Prostate gland (tissue), 2 donors: ENCODE measurements at regions of chr1 and their contacts with region 1.

Region 1: GRCh38 chr1:3423245-3423829 is 31.1 kb upstream of the ARHGEF16 start:
- DNase-seq: no peak
- H3K4me3 ChIP-seq: no peak overlapping the region
- H3K27ac ChIP-seq: no peak overlapping the region
- H3K4me1 ChIP-seq: no peaks in the 10 kb centered on the region
- H3K27me3 ChIP-seq: no peaks in the 10 kb centered on the region
- CTCF ChIP-seq: no peak
- POLR2A ChIP-seq: no peak

Region 2: GRCh38 chr1:2821966-2822620 is 601.2 kb before region 1 on chr1:
- intact Hi-C with region 1: loop called (anchors 2 kb)
- DNase-seq: peak; percentile 14
- H3K4me3 ChIP-seq: no peak overlapping the region
- H3K27ac ChIP-seq: no peak overlapping the region
- H3K4me1 ChIP-seq: no peaks in the 10 kb centered on the region
- H3K27me3 ChIP-seq: no peaks in the 10 kb centered on the region
- CTCF ChIP-seq: peak; percentile 23 to 79 (median 64)
- POLR2A ChIP-seq: no peak

Region 3: DNA sequence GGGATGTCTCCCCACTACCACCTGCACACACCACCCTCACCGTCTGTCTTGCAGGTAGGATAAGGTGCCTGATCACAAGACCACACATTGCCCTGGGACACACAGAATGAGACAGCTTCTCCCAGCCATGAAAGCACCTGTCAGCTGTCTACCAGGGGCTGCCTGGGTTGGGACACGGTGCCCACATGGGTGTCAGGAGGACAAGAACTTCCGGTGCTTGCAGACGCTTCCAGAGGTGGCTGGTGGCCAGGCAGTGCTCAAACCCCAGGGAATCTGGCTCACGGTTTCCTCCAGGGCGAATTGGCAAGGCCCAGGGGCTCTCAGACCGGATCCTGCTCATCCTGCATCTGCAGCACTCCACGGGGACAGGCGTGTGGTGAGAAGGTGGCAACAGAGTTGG is 151.5 kb before region 1 on chr1:
- intact Hi-C with region 1: no loop called
- DNase-seq: no peak
- H3K4me3 ChIP-seq: no peak overlapping the region
- H3K27ac ChIP-seq: no peak overlapping the region
- H3K4me1 ChIP-seq: no peaks in the 10 kb centered on the region
- H3K27me3 ChIP-seq: peaks cover 4% of the 10 kb centered on the region
- CTCF ChIP-seq: no peak
- POLR2A ChIP-seq: no peak

Region 4: DNA sequence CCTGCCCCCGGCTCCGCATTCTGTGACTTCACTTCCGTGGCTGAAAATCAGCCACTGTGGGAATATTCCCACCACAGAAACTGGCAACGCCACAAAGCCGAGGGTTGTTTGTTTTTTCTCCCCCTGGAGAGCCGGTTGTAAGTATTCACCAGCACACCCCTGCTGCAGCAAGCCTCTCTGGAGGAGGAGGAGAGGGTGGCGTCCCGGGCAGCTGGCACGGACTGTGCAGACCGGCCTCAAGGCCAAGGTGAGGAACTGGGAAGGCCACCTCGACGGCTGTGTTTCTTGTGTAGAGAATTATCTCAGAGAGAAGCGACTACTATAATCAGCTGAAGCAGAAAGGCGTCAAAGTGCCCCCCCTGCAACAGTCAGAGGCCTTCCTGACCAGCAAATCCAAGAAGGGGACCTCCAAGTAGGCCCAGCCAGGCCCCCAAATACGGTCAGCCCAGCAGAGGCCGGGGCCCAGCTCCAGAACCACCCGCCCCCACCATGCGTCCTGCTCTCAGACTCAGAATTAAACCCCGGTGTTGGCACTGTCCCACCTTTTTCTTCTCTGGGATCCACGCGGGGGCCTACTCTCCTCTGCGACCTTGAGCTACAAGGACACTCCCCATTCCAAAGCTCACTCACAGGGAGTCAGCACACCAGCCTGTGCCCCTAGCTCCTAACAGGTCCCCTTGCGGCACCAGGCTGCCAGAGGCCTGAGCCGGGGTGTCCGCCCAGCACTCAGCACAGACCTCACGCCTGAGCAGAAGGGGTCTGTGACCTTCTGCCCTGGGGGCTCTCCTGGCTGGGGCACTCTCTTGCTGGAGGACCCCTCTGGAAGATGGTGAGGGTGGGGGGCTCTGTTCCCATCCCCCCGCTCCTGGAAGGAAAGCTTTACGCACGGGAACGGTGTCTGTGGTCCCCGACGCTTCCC is 348.0 kb after region 1 on chr1:
- intact Hi-C with region 1: no loop called
- DNase-seq: no peak
- H3K4me3 ChIP-seq: peak overlapping the region; percentile 55 to 58
- H3K27ac ChIP-seq: peak overlapping the region in 1 of 2 donors; percentile 25
- H3K4me1 ChIP-seq: peaks cover 3% of the 10 kb centered on the region
- H3K27me3 ChIP-seq: no peaks in the 10 kb centered on the region
- CTCF ChIP-seq: no peak
- POLR2A ChIP-seq: no peak